ENCODE measurements at regions of chrX and their contacts with region 1.

Region 1: GRCh38 chrX:110156167-110156754 is 153.3 kb downstream of the TMEM164 start:
- DNase-seq: no peak

Region 2: DNA sequence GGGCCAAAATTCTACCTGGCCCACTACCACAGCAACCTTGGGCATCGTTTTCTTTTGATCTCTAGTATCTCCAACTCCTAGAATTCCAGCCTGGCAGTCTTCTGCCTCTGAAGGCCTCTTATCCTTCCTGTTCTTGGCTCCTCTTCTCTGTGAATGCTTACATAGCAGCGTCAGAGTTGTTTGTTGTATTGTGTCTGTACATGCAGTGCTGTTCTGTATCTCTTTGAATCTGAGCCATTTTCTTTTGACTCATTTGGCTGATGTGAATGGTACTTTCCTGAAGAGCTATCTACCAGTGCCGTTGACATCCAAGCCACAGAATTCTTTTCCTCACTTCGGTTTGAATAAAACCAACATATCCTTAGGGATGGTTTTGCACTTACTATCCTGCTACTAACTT is 74.1 kb before region 1 on chrX:
- CTCF ChIA-PET with region 1: no interaction called
- POLR2A ChIA-PET with region 1: no interaction called
- DNase-seq: no peak

Region 3: DNA sequence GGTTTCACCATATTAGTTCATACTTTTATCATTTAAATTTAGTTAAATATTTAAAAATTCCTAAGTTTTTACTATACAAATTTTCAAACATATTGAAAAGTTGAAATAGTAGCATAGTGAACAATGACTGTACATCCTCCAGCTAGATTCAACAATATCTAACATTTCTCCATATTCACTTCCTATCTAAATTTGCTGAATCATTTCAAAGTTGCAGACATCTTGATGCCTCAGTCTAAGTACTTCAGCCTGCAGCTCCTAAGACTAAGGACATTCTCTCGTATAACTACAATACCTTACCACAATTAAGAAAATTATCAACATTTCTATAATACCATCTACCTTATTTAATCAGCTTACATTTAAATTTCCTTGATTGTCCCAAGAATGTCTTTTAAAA is 20.6 kb before region 1 on chrX:
- CTCF ChIA-PET with region 1: no interaction called
- POLR2A ChIA-PET with region 1: no interaction called
- DNase-seq: no peak

Region 4: GRCh38 chrX:110180176-110180927 is 24.1 kb after region 1 on chrX:
- CTCF ChIA-PET with region 1: interaction called, 15 read pairs
- POLR2A ChIA-PET with region 1: interaction called, 3 read pairs
- DNase-seq: no peak

Region 5: GRCh38 chrX:110412971-110413721 is 256.9 kb after region 1 on chrX:
- CTCF ChIA-PET with region 1: interaction called, 166 read pairs
- POLR2A ChIA-PET with region 1: interaction called, 7 read pairs
- DNase-seq: peak; percentile 93